ENCODE measurements at regions of chr11 and their contacts with region 1.

Region 1: DNA sequence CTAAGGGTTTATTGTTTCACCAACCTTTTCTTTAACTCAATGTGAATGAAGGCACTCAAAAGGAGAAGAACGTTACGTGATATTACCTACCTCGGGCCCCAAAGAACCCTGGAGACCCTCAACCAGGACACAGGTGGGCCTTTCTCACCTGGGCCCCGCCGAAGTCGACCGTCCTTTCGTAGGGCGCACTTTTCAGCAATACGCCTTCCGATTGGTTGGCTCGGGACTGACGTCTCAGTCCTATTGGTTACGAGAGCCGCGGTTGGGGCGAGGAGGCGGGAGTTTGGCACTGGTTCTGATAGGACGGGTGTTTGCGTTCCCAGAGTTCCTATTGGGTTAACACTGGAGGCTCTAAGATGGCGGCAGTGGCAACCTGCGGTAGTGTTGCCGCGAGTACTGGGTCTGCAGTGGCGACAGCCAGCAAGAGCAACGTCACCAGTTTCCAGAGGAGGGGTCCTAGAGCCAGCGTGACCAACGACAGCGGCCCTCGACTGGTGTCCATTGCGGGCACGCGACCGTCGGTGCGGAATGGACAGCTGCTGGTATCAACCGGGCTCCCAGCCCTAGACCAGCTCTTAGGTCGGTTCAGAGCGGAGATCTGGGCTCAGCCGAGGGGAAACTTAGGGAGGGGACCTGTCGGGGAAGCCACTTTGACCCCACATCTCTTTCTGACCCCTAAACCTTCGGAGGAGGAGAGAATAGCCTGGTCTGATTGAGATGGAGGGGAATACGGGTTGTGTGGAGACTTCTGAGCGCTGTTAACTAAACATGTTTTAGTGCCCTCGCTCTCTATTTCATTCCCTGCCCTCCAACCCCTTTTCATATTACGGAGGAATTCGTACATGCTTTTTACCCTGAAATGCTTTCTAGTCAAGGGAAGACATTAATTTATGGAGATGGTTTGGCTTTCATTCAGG is at the starts of genes ELP4 and IMMP1L:
- DNase-seq: peak; percentile 95 to 97 (median 96)
- H3K4me3 ChIP-seq: peak within 1 kb of the TSS; percentile 90 to 98
- H3K4me3 Mint-ChIP-seq: peak within 1 kb of the TSS; percentile 97 to 100 (median 99)
- H3K27ac ChIP-seq: peak within 1 kb of the TSS; percentile 76
- H3K27ac Mint-ChIP-seq: peak within 1 kb of the TSS; percentile 94 to 99 (median 98)
- H3K4me1 ChIP-seq: peaks cover 28% of the 10 kb centered on the region
- H3K4me1 Mint-ChIP-seq: peaks cover 21 to 57% (median 38%) of the 10 kb centered on the region in 4 donors
- H3K27me3 ChIP-seq: no peaks in the 10 kb centered on the region
- H3K27me3 Mint-ChIP-seq: no peaks in the 10 kb centered on the region
- total RNA-seq, gene ELP4: 18.6 to 19.6 TPM
- total RNA-seq, gene IMMP1L: 16.3 to 17.0 TPM

Region 2: DNA sequence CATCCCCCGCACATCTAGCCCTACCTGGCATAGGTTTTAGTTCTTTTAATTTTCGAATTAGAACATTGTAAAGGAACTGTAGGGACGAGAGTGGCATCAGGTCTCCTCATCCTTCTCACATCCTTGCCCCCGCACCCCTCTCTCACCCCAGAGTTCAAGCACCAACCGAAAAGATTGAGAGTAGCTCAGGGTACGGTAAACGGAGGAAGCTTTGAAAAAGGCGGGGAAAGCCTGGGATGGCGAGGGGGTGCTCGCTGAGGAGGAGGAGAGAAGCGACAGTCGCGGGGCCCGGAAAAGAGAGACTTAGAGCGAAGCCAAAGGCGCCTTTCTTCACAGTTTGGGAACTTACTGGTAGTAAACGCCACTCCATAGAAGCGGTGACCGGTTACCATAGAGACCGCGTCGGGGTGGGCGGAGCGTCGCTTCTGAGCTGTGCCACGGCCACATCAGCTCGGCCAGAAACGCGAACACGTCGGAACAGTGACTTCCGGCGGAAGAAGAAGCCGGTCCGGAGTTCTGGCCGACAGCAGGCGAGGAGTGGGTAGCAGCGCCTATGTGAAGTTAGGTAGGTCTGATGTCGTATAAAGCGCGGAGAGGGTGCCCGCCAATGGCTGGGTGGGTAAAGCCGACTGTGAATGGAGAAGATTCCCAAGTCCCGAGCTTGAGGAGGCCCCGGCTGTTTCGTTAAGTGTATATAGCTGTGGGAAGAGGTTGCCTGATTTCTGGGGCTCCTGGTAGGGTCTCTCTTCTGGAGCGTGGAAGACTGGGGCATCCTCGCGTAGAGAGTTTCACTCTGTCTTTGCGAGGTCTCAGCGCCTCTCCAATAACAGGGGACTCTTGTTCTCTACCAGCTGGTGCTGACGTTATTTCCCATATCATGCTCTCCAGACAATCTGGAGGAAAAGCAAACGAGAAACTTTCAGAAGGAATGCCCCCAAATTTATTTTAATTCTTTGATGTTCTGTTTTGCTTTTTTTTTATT is 140.0 kb before region 1 on chr11 and contains the starts of genes DCDC1 and DNAJC24:
- CTCF ChIA-PET with region 1: interaction called, 4 read pairs
- POLR2A ChIA-PET with region 1: interaction called, 8 read pairs
- intact Hi-C with region 1: loop called (anchors 1 kb)
- DNase-seq: peak; percentile 87 to 93 (median 91)
- H3K4me3 ChIP-seq: peak within 1 kb of the TSS; percentile 81 to 82
- H3K4me3 Mint-ChIP-seq: peak within 1 kb of the TSS; percentile 93 to 100 (median 99)
- H3K27ac ChIP-seq: peak within 1 kb of the TSS; percentile 78
- H3K27ac Mint-ChIP-seq: peak within 1 kb of the TSS; percentile 86 to 99 (median 98)
- H3K4me1 ChIP-seq: peaks cover 45% of the 10 kb centered on the region
- H3K4me1 Mint-ChIP-seq: peaks cover 37 to 70% (median 49%) of the 10 kb centered on the region in 4 donors
- H3K27me3 ChIP-seq: no peaks in the 10 kb centered on the region
- H3K27me3 Mint-ChIP-seq: no peaks in the 10 kb centered on the region
- total RNA-seq, gene DCDC1: 0.17 to 0.29 TPM
- total RNA-seq, gene DNAJC24: 24.8 to 27.1 TPM

Region 3: GRCh38 chr11:31487848-31488247 is 21.8 kb before region 1 on chr11:
- CTCF ChIA-PET with region 1: no interaction called
- POLR2A ChIA-PET with region 1: no interaction called
- intact Hi-C with region 1: loop called (anchors 2 kb)
- DNase-seq: peak in 1 of 5 donors; percentile 11
- H3K4me3 ChIP-seq: no peak overlapping the region
- H3K4me3 Mint-ChIP-seq: no peak overlapping the region
- H3K27ac ChIP-seq: no peak overlapping the region
- H3K27ac Mint-ChIP-seq: peak overlapping the region in 1 of 7 donors; percentile 22
- H3K4me1 ChIP-seq: no peaks in the 10 kb centered on the region
- H3K4me1 Mint-ChIP-seq: peaks cover 9 to 23% (median 17%) of the 10 kb centered on the region in 4 donors
- H3K27me3 ChIP-seq: no peaks in the 10 kb centered on the region
- H3K27me3 Mint-ChIP-seq: no peaks in the 10 kb centered on the region

Region 4: GRCh38 chr11:32583459-32584271 is 1074.0 kb after region 1 on chr11 and contains the start of gene EIF3M:
- CTCF ChIA-PET with region 1: no interaction called
- POLR2A ChIA-PET with region 1: no interaction called
- intact Hi-C with region 1: loop called (anchors 5 kb)
- DNase-seq: peak; percentile 94 to 95 (median 94)
- H3K4me3 ChIP-seq: peak within 1 kb of the TSS; percentile 73 to 89
- H3K4me3 Mint-ChIP-seq: peak within 1 kb of the TSS; percentile 94 to 99 (median 97)
- H3K27ac ChIP-seq: peak within 1 kb of the TSS; percentile 93
- H3K27ac Mint-ChIP-seq: peak within 1 kb of the TSS; percentile 95 to 99 (median 98)
- H3K4me1 ChIP-seq: peaks cover 41% of the 10 kb centered on the region
- H3K4me1 Mint-ChIP-seq: peaks cover 31 to 51% (median 39%) of the 10 kb centered on the region in 4 donors
- H3K27me3 ChIP-seq: no peaks in the 10 kb centered on the region
- H3K27me3 Mint-ChIP-seq: no peaks in the 10 kb centered on the region
- total RNA-seq, gene EIF3M: 214 to 223 TPM

Region 5: GRCh38 chr11:32893343-32894148 is 1383.9 kb after region 1 on chr11:
- CTCF ChIA-PET with region 1: no interaction called
- POLR2A ChIA-PET with region 1: no interaction called
- intact Hi-C with region 1: loop called (anchors 5 kb)
- DNase-seq: peak in 3 of 5 donors; percentile 36 to 61 (median 38)
- H3K4me3 ChIP-seq: peak overlapping the region; percentile 57 to 72
- H3K4me3 Mint-ChIP-seq: peak overlapping the region; percentile 87 to 96 (median 94)
- H3K27ac ChIP-seq: peak overlapping the region; percentile 58
- H3K27ac Mint-ChIP-seq: peak overlapping the region; percentile 84 to 94 (median 88)
- H3K4me1 ChIP-seq: peaks cover 17% of the 10 kb centered on the region
- H3K4me1 Mint-ChIP-seq: peaks cover 20 to 36% (median 29%) of the 10 kb centered on the region in 4 donors
- H3K27me3 ChIP-seq: no peaks in the 10 kb centered on the region
- H3K27me3 Mint-ChIP-seq: no peaks in the 10 kb centered on the region

Measured in CD4-positive, alpha-beta memory T cell (primary cell).